ENCODE measurements at regions of chr18 and their contacts with region 1.

Region 1: DNA sequence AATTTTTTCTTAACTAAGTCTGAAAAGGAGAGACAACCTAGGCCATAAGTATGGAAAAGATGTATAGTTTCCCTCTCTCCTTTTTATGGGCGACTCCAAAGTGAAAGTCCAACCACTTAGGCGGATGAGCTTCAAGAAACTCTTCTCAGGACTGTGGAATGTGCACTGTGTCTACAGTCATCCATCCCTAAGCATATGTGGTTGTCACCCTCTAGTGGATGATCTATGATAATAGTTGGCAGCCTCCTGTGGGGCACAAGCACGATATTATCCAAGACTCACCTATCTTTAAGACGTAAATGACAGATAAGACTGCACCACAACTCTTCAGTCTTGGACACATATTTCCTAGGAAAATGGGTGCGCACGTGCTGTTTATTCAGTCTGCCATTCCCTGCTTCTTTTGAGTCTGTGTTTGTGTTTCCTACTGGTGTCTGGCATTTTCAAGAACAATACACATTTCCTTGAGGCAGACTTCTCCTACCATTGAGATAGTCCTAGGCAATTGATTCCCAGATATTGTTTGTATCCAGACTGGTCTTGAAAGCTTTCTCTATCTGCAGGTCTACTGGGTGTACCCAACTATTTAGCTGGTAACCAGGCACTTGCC is 145.5 kb upstream of the CTAGE1 start:
- DNase-seq: no peak

Region 2: DNA sequence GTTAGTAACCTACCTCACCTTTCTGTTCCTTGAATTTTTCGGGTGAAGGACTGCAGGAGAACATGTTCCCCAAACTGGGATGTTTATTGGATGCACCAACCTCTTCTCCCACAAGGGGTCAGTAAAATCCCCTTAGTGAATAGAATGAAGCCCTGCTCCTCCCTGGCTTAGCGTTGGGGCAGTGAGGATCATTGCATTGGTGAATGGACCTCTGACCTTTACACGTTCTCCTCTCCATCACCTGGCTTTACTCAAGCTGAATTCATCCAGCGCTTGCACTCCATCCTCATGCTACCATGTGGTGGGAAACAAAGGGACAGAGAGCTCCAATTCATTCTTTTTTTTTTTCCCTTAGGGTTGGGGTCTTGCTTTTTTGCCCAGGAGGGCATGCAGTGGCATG is 665.4 kb before region 1 on chr18:
- intact Hi-C with region 1: loop called (anchors 5 kb)
- DNase-seq: no peak

Region 3: GRCh38 chr18:22174341-22175145 is 388.7 kb before region 1 on chr18:
- intact Hi-C with region 1: loop called (anchors 2 kb)
- DNase-seq: no peak

Region 4: GRCh38 chr18:22279741-22280452 is 283.3 kb before region 1 on chr18:
- intact Hi-C with region 1: loop called (anchors 5 kb)
- DNase-seq: no peak

Region 5: DNA sequence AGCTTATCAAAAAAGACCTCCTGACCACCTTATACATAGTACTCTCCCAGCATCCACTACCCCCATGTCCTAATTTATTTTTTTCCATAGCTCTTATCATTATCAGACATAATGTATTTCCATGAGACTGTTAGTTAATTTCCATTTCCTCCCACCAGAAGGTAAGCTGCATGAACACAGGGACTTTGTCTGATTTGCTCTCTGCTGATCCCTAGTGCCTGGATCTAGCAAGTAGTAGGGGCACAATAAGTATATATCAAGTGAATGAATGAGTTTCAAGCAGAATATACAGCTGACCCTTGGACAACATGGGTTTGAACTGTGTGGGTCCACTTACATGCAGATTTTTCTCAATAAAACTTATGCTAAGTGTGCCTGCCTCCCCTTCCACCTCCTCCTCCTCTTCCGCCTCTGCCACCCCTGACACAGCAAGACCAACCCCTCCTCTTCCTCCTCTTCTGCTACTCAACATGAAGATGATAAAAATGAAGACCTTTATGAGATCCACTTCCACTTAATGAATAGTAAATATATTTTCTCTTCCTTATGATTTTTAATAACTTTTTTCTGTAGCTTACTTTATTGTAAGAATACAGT is 199.2 kb before region 1 on chr18:
- intact Hi-C with region 1: loop called (anchors 5 kb)
- DNase-seq: no peak

Region 6: DNA sequence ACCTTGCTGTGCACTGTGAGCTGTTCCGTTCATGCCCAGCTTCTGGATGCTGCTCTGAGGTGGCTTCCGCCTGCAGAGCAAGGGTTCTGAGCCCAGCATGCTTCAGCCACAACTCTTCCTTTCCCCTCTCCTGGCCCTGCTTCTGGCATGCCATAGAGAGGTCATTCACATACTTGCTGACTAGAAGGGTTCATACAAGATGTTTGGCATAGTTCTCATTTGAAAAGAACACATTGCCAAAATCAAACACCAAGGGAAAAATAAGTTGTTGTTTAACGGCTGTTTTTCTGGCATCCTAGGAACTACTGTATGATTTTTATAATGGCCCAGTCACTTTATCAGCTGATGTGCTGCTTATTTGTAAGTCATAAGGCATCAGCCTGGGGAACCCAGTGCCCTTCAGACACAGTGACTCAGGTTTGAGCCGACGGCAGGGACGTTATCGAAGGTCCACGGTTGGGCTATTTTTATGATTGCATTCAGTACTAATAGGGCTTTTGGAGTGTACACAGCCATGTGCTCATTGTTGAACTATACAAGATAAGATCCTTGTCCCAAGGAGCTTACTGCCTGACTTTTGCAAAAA is 91.6 kb before region 1 on chr18:
- intact Hi-C with region 1: loop called (anchors 1 kb)
- DNase-seq: peak; percentile 80

Measured in cardiac septum (tissue), 1 donor.